ENCODE measurements at regions of chr3 and their contacts with region 1.

Region 1: DNA sequence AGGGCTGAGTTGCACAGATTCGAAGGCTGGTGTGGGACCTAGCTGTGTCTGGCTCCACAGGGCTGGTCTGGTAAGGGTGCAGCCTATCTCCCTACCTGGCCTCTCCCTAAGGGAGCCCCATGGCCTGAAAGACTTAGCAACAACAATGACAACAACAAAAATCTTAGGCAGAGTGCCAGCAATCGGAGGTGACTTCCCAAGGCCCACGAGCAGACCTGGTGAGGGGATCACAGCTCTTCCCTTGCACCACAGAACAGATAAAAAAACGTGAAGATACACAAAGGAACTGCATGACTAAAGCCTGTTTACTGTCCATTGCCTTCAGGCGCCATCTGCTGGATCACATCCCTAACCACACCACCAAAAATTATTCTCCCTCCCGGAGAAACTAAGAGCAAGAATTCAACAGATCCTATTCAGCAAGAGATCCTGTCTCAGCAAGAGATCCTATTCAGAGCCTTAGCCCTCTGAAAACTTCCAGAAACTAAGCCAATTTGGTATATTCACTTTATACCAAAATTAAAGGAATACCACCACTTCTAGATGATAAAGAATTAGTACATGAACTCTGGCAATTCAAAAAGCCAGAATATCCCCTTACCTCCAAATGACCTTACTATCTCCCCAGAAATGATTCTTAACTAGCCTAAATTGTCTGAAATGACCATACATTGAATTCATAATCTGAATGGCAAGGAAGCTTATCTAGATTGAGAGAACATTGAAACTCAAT is 24.1 kb upstream of the OR5K4 start:
- DNase-seq: peak; percentile 73
- ATAC-seq: peak; percentile 78
- H3K4me3 ChIP-seq: no peak overlapping the region
- H3K27ac ChIP-seq: no peak overlapping the region
- H3K4me1 ChIP-seq: 0 out of 2 replicates have a peak, but pooled peaks cover 4% of the 10 kb centered on the region
- H3K27me3 ChIP-seq: peaks cover 42% of the 10 kb centered on the region
- CTCF ChIP-seq: peak; percentile 87

Region 2: GRCh38 chr3:97793420-97794019 is 536.0 kb before region 1 on chr3:
- CTCF ChIA-PET with region 1: no interaction called
- POLR2A ChIA-PET with region 1: no interaction called
- intact Hi-C with region 1: loop called (anchors 10 kb)
- DNase-seq: peak; percentile 71
- ATAC-seq: peak; percentile 60
- H3K4me3 ChIP-seq: no peak overlapping the region
- H3K27ac ChIP-seq: no peak overlapping the region
- H3K4me1 ChIP-seq: no peaks in the 10 kb centered on the region
- H3K27me3 ChIP-seq: no peaks in the 10 kb centered on the region
- CTCF ChIP-seq: peak; percentile 92

Region 3: GRCh38 chr3:98188545-98188944 is 141.0 kb before region 1 on chr3:
- CTCF ChIA-PET with region 1: interaction called, 3 read pairs
- POLR2A ChIA-PET with region 1: no interaction called
- intact Hi-C with region 1: loop called (anchors 1 kb)
- DNase-seq: peak; percentile 56
- ATAC-seq: peak; percentile 85
- H3K4me3 ChIP-seq: no peak overlapping the region
- H3K27ac ChIP-seq: no peak overlapping the region
- H3K4me1 ChIP-seq: no peaks in the 10 kb centered on the region
- H3K27me3 ChIP-seq: peaks cover 13% of the 10 kb centered on the region; the same call in 1 of the 2 replicates
- CTCF ChIP-seq: peak; percentile 65

Region 4: DNA sequence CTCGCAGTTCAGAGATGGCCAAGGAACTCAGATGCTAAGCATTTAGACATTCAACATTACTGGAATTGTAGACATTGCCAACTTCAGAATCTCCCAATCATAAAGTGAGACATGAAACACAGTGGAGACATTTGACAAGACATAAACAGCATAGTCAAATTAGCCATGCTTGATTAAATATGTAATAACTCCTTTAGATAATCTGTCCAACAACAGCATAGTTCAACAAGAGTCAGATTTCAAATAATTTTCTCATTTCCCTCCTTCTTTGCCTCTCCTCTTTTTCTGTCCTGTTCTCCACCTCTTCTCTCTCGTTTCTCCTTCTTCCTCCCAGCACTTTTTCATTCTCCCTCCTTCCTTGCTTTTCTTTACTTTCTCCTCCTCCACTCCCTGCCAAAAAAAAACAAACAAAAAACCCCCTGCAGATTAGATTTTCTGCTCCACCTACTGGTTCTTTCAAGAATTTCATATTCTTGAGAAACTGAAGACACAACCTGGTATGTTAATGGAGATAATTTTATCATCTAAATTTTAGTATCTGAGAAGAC is 243.7 kb after region 1 on chr3:
- CTCF ChIA-PET with region 1: interaction called, 3 read pairs
- POLR2A ChIA-PET with region 1: no interaction called
- intact Hi-C with region 1: loop called (anchors 5 kb)
- DNase-seq: peak; percentile 76
- ATAC-seq: peak; percentile 60
- H3K4me3 ChIP-seq: no peak overlapping the region
- H3K27ac ChIP-seq: no peak overlapping the region
- H3K4me1 ChIP-seq: peaks cover 16% of the 10 kb centered on the region
- H3K27me3 ChIP-seq: no peaks in the 10 kb centered on the region
- CTCF ChIP-seq: peak; percentile 89

Region 5: GRCh38 chr3:98645039-98645438 is 315.5 kb after region 1 on chr3:
- CTCF ChIA-PET with region 1: no interaction called
- POLR2A ChIA-PET with region 1: no interaction called
- intact Hi-C with region 1: no loop called
- DNase-seq: no peak
- ATAC-seq: no peak
- H3K4me3 ChIP-seq: no peak overlapping the region
- H3K27ac ChIP-seq: no peak overlapping the region
- H3K4me1 ChIP-seq: no peaks in the 10 kb centered on the region
- H3K27me3 ChIP-seq: no peaks in the 10 kb centered on the region
- CTCF ChIP-seq: no peak

Measured in PC-3 (cell line).